ENCODE measurements at regions of chr17 and their contacts with region 1.

Region 1: GRCh38 chr17:48351831-48352332 is 78.1 kb downstream of the SKAP1 start:
- DNase-seq: no peak
- H3K4me3 ChIP-seq: no peak overlapping the region
- H3K27ac ChIP-seq: no peak overlapping the region
- H3K4me1 ChIP-seq: peaks cover 0 to 6% (median 0%) of the 10 kb centered on the region in 4 donors
- H3K27me3 ChIP-seq: peaks cover 11% of the 10 kb centered on the region
- CTCF ChIP-seq: peak; percentile 52 to 74 (median 67)
- EP300 ChIP-seq: no peak
- POLR2A ChIP-seq: no peak

Region 2: GRCh38 chr17:48406936-48407567 is 55.2 kb after region 1 on chr17:
- in situ Hi-C with region 1: no loop called
- intact Hi-C with region 1: no loop called
- DNase-seq: no peak
- H3K4me3 ChIP-seq: no peak overlapping the region
- H3K27ac ChIP-seq: no peak overlapping the region
- H3K4me1 ChIP-seq: peaks cover 0 to 5% (median 0%) of the 10 kb centered on the region in 4 donors
- H3K27me3 ChIP-seq: peaks cover 41% of the 10 kb centered on the region
- CTCF ChIP-seq: no peak
- EP300 ChIP-seq: no peak
- POLR2A ChIP-seq: no peak

Region 3: DNA sequence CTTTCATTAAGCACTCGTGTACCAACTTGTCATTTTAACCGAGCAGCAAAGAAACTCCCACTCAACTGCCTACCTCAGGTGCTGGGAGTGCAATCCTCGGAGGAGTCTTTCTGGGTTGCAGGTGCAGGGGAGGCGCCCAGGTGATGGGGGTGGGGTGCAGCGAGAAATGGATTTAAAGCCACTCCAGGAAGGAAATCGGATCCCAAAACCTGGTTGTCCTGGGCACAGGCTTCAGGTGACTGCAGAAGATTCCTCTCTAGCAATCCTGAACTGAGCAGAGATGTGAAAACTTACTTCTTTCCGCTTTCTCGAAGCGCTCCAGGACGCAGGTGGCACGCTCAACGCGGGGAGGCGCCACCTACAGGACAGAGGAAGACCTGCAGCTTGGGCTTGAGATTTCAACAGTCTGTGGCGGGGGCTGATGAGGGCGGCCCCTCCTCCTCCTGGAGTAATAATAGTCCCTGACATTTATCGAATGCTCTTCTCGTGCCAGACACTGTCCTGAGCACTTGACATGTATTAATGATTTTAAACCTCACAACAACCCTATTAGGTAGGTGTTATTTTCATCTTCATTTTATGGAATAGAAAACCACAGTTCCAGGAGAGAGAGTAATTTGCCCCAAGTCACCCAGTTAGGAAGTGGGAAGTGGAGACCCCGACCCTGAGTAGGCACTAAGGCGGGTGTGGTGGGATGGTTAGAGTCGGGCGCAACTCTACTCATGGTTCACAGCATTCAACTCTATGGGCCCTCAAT is 105.4 kb after region 1 on chr17:
- in situ Hi-C with region 1: loop called in 1 of 4 experiments (anchors 10 kb)
- intact Hi-C with region 1: loop called (anchors 10 kb)
- DNase-seq: peak; percentile 61
- H3K4me3 ChIP-seq: peak overlapping the region in 1 of 4 donors; percentile 14
- H3K27ac ChIP-seq: no peak overlapping the region
- H3K4me1 ChIP-seq: peaks cover 0 to 13% (median 6%) of the 10 kb centered on the region in 4 donors
- H3K27me3 ChIP-seq: peaks cover 12% of the 10 kb centered on the region
- CTCF ChIP-seq: peak; percentile 84 to 99 (median 96)
- EP300 ChIP-seq: no peak
- POLR2A ChIP-seq: no peak